ENCODE measurements at regions of chr15 and their contacts with region 1.

Region 1: GRCh38 chr15:89171136-89172072 is 50.0 kb downstream of the RLBP1 start:
- DNase-seq: peak; percentile 43 to 52
- H3K4me3 ChIP-seq: no peak overlapping the region
- H3K27ac ChIP-seq: no peak overlapping the region
- H3K4me1 ChIP-seq: peaks cover 23% of the 10 kb centered on the region
- H3K27me3 ChIP-seq: no peaks in the 10 kb centered on the region
- CTCF ChIP-seq: peak; percentile 84

Region 2: GRCh38 chr15:88745696-88746095 is 425.7 kb before region 1 on chr15:
- CTCF ChIA-PET with region 1: no interaction called
- POLR2A ChIA-PET with region 1: no interaction called
- intact Hi-C with region 1: no loop called
- DNase-seq: no peak
- H3K4me3 ChIP-seq: no peak overlapping the region
- H3K27ac ChIP-seq: no peak overlapping the region
- H3K4me1 ChIP-seq: no peaks in the 10 kb centered on the region
- H3K27me3 ChIP-seq: peaks cover 57% of the 10 kb centered on the region
- CTCF ChIP-seq: no peak

Region 3: GRCh38 chr15:88865498-88866099 is 305.8 kb before region 1 on chr15:
- CTCF ChIA-PET with region 1: no interaction called
- POLR2A ChIA-PET with region 1: no interaction called
- intact Hi-C with region 1: no loop called
- DNase-seq: no peak
- H3K4me3 ChIP-seq: no peak overlapping the region
- H3K27ac ChIP-seq: no peak overlapping the region
- H3K4me1 ChIP-seq: no peaks in the 10 kb centered on the region
- H3K27me3 ChIP-seq: peaks cover 74% of the 10 kb centered on the region
- CTCF ChIP-seq: no peak

Region 4: DNA sequence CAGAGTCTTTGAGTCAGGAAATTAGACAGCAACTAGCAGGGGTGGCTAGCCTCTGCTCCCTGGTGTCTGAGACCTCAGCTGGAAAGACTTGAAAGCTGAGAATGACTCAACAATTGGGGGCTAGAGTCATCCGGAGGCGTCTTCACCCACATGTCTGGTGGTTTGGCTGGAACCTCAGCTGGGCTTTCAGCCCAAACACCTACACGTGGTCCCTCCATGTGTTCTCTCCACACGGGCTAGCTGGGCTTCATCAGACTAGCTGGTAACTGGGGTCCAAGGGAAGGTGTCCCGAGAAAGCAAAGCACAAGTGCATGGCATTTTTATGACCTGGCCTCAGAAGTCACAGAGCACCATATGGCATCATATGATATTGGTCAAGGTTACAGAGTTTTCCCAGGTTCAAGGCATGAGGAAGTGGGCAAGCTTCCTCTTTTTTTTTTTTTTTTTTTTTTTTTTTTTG is 103.0 kb before region 1 on chr15:
- CTCF ChIA-PET with region 1: no interaction called
- POLR2A ChIA-PET with region 1: interaction called, 32 read pairs
- intact Hi-C with region 1: no loop called
- DNase-seq: no peak
- H3K4me3 ChIP-seq: no peak overlapping the region
- H3K27ac ChIP-seq: no peak overlapping the region
- H3K4me1 ChIP-seq: no peaks in the 10 kb centered on the region
- H3K27me3 ChIP-seq: no peaks in the 10 kb centered on the region
- CTCF ChIP-seq: no peak

Region 5: DNA sequence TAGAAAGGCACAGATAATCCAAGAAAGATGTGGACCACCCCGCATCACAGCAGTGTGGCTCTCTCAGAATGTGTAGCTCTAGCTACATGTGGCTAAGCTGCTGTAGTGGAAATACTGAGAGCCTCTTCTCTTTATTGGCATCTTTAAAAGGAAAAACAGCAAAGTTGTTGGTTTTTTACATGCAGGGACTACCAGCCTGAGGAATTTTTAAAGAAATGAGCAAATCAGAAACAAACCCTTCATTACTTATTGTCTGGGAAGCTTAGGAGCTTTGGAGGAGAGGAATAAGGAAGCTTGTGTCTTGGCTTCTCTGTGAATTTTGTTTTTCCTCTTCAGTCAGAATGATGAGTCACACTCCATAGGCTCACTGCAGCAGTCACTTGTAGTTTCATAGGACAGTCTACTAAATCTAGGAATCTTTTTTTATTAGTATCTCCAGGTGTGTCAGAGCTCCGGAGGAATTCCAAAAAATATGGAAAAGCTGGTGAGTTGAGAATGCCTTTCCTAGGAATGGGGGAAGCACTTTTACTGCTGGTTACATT is 135.7 kb after region 1 on chr15:
- CTCF ChIA-PET with region 1: no interaction called
- POLR2A ChIA-PET with region 1: interaction called, 16 read pairs
- intact Hi-C with region 1: no loop called
- DNase-seq: no peak
- H3K4me3 ChIP-seq: no peak overlapping the region
- H3K27ac ChIP-seq: peak overlapping the region; percentile 18; the same call in 1 of the 2 replicates
- H3K4me1 ChIP-seq: no peaks in the 10 kb centered on the region
- H3K27me3 ChIP-seq: no peaks in the 10 kb centered on the region
- CTCF ChIP-seq: no peak

Region 6: DNA sequence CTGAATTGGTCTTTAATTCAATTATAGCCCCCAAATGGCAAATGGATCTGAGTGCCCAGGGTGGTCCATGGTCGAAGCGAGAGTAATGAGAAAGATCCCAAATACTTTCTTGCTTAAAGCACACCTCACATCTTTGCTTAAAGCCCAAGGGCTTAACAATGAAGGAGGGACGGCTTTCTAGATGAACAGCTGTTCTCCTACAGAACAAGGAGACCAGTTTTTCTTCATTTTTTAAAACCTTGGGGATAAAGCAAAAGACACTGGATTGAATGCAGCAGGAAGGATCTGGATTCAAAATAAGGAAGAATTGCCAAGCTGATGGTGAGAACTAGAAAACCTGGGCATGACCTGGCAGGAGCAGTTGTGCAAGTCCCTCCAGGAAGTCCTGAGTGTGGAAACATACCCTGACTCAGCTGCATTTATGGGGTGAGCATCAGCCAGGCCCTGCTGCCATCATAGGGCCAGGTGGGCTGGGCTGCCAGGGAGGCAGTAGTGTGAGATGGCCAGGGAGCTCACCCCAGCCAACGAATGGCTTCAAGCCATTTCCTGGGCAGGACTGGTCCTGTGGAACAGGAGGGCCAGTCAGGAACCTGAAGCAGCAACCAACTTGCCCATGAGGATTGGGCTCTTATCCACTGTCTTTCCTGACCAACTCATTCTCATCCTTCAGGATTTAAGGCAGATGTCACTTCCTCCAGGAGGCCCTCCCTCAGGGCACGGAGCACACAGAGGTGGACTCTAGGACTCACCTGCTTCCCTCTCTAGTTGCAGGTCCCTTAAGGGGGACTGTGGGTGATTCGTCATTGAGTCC is 343.4 kb after region 1 on chr15:
- CTCF ChIA-PET with region 1: no interaction called
- POLR2A ChIA-PET with region 1: no interaction called
- intact Hi-C with region 1: no loop called
- DNase-seq: peak; percentile 56 to 98
- H3K4me3 ChIP-seq: no peak overlapping the region
- H3K27ac ChIP-seq: peak overlapping the region; percentile 94
- H3K4me1 ChIP-seq: peaks cover 22% of the 10 kb centered on the region
- H3K27me3 ChIP-seq: no peaks in the 10 kb centered on the region
- CTCF ChIP-seq: no peak

Measured in PC-9 (cell line).